Dendritic cell treated with granulocyte-macrophage colony-stimulating factor and Interleukin-4, amounts not matched to agents 40 ng/mL and 50 ng/mL, for 4 days (primary cell): ENCODE measurements at regions of chr7 and their contacts with region 1.

Region 1: DNA sequence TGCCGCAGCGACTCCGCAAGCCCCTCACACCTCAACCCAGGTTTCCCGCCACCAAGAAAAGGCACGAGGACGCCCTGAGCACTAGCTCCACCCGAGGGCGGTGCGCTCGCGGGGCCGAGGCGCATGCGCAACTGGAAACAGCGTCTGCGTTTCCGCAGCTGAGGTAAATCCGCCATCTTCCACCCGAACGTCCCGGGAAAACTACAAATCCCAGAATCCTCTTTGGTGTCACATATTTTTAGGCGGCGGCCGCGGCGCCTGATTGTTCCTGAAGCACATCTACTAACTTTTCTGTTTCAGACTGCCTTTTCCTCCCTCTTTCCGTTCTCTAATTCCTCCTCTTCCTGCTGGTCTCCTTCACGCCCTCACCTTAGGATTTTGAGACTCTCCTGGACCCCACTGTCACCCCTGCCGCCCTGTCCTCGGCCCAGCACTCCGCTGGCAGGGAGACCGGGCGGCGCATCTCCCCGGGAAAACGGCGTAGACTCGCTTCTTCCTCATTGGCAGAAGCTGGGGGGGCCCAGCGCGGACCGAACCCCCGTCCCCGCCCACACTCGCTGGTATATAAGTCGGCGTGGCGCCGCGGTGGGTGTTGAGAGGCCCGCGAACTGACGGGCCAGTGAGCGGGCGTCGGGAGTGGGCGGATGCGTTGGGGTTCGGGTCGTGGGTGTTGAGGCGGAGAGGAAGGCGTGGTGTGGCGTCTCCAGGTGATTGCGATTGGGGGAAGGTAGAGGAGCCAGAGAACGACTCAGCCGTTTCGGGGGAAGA is at the start of gene ZCWPW1:
- H3K4me3 Mint-ChIP-seq: peak within 1 kb of the TSS; percentile 94
- H3K27ac Mint-ChIP-seq: peak within 1 kb of the TSS; percentile 97
- H3K4me1 Mint-ChIP-seq: peaks cover 51% of the 10 kb centered on the region
- H3K27me3 Mint-ChIP-seq: no peaks in the 10 kb centered on the region

Region 2: GRCh38 chr7:100369105-100369504 is 59.3 kb before region 1 on chr7:
- intact Hi-C with region 1: loop called (anchors 2 kb)
- H3K4me3 Mint-ChIP-seq: peak overlapping the region; percentile 9
- H3K27ac Mint-ChIP-seq: peak overlapping the region; percentile 88
- H3K4me1 Mint-ChIP-seq: peaks cover 96% of the 10 kb centered on the region
- H3K27me3 Mint-ChIP-seq: no peaks in the 10 kb centered on the region

Region 3: GRCh38 chr7:100965723-100966541 is 537.5 kb after region 1 on chr7:
- intact Hi-C with region 1: no loop called
- H3K4me3 Mint-ChIP-seq: no peak overlapping the region
- H3K27ac Mint-ChIP-seq: no peak overlapping the region
- H3K4me1 Mint-ChIP-seq: peaks cover 6% of the 10 kb centered on the region
- H3K27me3 Mint-ChIP-seq: peaks cover 65% of the 10 kb centered on the region

Region 4: DNA sequence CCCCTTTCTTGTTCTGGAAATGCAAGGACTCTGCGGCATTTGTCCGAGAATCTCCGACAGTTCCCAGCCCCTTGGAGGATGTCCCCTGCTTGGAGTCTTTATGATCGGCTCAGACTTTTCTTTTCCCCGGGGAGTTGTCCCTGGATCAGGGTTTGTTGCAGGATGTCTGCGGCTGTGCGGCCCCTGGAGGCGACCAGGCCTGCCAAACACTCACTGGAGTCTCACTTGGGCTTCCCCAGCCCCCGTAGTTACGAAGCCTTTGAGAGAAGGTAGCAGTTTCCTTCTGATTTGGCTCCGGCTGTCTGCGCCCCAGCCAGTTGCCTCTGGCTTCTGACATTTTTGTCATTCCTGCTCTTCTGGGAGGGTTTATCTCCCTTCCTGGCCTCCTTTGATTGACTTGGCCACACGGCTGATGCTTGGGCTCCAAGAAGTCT is 950.4 kb after region 1 on chr7:
- intact Hi-C with region 1: no loop called
- H3K4me3 Mint-ChIP-seq: no peak overlapping the region
- H3K27ac Mint-ChIP-seq: no peak overlapping the region
- H3K4me1 Mint-ChIP-seq: no peaks in the 10 kb centered on the region
- H3K27me3 Mint-ChIP-seq: peaks cover 24% of the 10 kb centered on the region